GM13977 (cell line): ENCODE measurements at regions of chr16 and their contacts with region 1.

Region 1: DNA sequence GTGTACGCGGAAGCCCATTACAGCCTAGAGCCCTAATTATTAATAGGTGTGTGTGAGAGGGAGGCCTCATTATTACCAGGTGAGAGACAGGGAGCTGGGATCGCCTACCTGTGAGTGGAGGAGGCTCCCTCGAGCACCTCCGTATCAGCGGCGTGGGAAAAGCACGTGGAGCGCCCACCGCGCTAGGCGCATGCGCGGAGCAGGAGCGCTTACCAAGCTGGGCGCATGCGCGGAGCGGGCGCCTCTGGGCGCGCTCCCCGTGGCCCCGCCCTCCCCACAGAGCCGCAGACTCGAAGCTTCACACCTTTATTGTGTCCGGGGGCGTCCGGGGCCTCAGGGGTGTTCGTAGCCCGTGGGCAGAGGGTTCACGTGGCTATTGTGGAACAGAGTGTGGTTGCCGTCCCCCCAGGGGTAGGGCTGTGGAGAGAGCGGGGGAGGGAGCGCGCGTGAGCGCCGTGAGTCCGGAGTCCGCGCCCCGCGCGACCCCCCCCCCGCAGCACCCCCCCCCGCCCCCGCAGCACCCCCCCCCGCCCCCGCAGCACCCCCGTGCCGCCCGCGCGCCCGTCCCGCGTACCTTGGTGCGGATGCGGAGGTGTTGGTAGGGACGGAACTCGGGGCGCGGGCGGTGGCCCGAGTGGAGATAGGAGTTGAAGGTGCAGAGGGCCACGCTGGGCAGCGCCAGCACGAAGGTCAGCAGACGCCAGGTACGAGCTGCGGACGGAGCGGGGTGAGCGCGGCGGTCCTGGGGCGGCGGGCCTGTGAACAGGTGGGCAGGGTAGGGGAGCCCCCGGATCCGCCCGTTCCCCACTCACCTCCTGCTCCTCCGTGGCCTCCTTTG is 500 bp downstream of the COX6A2 start:
- DNase-seq: peak; percentile 80
- CTCF ChIP-seq: no peak

Region 2: DNA sequence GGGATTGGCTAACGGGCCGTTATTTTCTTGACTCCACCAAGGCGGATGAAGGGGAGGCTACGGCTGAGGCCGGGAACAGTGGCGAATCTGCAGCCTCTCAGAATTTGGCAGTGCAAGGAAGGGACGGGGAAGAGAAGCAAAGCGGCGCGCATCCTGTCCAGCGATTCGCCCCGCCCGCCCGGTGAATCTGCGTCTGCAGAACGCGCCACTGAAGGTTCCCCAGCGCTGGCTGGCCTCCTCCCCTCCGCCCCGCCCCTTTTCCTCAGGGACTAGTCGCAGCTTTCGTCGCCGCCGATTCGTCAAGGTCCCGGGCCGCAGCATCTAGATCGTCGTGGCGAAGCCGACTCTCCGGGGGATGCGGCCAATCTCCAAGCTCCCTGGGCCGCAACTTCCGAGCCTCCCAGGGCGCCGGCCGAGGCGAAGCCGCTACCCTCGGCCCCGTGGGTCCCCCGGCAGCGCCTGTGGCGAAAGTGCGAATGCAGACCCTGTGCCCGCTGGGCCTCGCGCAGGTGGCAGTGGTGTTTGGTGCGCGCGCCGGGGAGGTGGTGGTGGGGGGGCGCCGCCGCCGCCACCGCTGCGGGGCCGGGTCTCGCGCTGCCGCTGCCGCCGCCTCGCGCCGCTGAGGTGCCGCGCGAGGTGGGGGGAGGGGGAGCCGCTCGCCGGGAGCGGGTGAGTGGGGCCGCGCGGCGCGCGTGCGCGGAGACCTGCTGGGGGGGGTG is 470.0 kb before region 1 on chr16 and contains the start of gene SETD1A:
- in situ Hi-C with region 1: loop called (anchors 25 kb)
- DNase-seq: peak; percentile 98
- CTCF ChIP-seq: no peak